ENCODE measurements at regions of chr6 and their contacts with region 1.

Region 1: DNA sequence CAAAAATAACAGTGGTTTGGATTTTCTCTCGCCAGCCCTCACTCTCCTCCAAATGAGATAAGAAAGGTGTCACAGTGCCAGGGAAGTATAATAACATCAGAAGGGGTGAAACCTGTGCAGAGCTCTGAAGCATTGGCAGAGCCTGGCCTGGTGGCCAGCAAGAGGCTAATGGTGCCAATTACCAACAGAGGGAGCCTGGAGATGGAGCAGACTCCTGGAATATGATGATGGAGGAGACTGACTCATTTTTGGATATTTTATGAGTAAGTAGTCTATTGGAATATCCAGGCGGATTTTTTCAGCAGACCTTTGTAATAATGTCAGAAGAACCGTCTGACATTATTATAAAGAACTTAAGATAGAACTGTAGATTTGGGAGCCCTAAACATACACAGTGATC is 442.6 kb upstream of the MARCKS start:
- DNase-seq: peak; percentile 35 to 66
- H3K4me3 ChIP-seq: no peak overlapping the region
- H3K27ac ChIP-seq: no peak overlapping the region
- H3K4me1 ChIP-seq: peaks cover 30% of the 10 kb centered on the region
- H3K27me3 ChIP-seq: no peaks in the 10 kb centered on the region
- CTCF ChIP-seq: peak; percentile 67; the same call in 1 of the 2 replicates

Region 2: GRCh38 chr6:112865120-112865519 is 549.4 kb before region 1 on chr6:
- CTCF ChIA-PET with region 1: interaction called, 10 read pairs
- POLR2A ChIA-PET with region 1: no interaction called
- intact Hi-C with region 1: no loop called
- DNase-seq: no peak
- H3K4me3 ChIP-seq: no peak overlapping the region
- H3K27ac ChIP-seq: no peak overlapping the region
- H3K4me1 ChIP-seq: no peaks in the 10 kb centered on the region
- H3K27me3 ChIP-seq: no peaks in the 10 kb centered on the region
- CTCF ChIP-seq: no peak

Region 3: DNA sequence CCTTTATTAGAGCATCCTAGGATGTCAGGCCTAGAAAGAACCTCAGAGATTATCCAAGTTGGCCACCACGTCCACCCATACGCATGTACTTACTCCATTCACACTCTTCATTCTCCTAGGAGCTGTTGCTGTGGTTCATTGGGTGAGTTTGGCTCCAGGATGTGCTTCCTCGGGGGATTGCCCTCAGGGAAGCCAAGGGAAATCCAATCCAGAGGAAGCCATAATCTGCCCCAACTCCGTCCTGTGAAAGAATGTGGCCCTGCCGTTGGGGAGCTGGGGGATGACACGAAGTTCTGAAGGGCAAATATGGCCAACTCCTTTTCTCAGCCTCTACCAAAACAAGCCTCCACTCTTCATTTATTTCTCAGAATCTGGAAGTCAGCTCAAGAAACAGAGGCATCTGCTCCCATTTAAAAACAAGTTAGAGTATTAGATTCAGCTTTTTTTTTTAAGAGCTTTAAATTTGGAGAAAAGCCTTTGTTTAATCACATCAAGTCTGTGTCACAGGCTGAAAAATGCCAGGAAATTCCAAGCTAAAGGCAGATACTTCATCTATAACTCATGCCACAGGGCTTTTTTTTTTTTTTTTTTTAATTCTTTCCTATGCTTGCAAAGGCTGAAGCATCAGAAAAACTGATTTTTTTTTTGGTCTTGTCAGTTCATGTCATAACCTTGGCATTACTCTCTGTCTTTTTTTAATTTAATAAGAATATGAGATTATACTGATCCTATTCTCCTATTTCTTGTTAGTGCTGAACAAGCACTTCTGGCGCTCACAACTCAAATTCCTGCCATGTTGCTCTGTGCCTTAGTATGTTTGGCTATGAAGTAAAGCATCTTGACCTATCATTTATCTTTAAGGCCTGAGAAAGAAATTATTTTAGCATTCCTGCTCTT is 38.3 kb before region 1 on chr6:
- CTCF ChIA-PET with region 1: no interaction called
- POLR2A ChIA-PET with region 1: no interaction called
- intact Hi-C with region 1: no loop called
- DNase-seq: peak in 1 of 2 experiments; percentile 41
- H3K4me3 ChIP-seq: no peak overlapping the region
- H3K27ac ChIP-seq: no peak overlapping the region
- H3K4me1 ChIP-seq: peaks cover 15% of the 10 kb centered on the region
- H3K27me3 ChIP-seq: no peaks in the 10 kb centered on the region
- CTCF ChIP-seq: no peak

Region 4: GRCh38 chr6:113690281-113691259 is 276.1 kb after region 1 on chr6:
- CTCF ChIA-PET with region 1: no interaction called
- POLR2A ChIA-PET with region 1: no interaction called
- intact Hi-C with region 1: loop called (anchors 10 kb)
- DNase-seq: peak; percentile 21 to 86
- H3K4me3 ChIP-seq: no peak overlapping the region
- H3K27ac ChIP-seq: no peak overlapping the region
- H3K4me1 ChIP-seq: peaks cover 39% of the 10 kb centered on the region
- H3K27me3 ChIP-seq: no peaks in the 10 kb centered on the region
- CTCF ChIP-seq: no peak

Measured in PC-9 (cell line).